ENCODE measurements at regions of chr6 and their contacts with region 1.

Region 1: GRCh38 chr6:132798869-132799538 is 567 bp upstream of the SLC18B1 start:
- DNase-seq: peak; percentile 86
- H3K4me3 ChIP-seq: peak overlapping the region; percentile 95 to 97 (median 96)
- H3K27ac ChIP-seq: peak overlapping the region; percentile 26
- H3K4me1 ChIP-seq: peaks cover 3% of the 10 kb centered on the region
- H3K27me3 ChIP-seq: peaks cover 0 to 3% of the 10 kb centered on the region in 2 experiments
- CTCF ChIP-seq: peak; percentile 78 to 84
- POLR2A ChIP-seq: no peak

Region 2: DNA sequence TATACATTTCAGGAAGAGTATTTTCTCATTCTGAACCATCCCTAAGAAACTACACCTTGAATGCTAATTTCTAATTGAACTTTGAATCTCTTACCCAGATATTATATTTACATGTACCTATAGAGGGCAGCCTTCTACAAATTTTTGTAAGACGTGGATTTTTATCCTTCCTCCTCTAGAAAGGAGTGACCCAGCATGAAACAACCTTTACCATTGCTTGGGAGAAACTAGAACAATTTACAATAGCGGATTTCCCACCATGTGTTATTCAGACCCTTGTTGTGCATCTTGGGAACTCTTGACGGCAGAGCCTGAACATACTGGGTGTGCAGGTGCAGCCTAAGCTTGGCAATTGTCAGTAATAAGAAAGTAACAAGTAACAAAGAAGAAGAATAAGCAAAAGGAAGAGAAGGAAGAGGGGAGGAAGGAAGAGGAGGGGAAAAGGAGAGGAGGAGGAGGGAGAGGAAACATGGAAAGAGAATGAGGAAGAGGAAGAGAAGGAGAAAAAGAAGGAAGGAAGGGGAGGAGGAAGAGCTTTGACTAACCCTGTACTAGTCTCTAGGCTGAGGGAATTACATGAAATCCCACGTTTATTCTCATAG is 129.2 kb before region 1 on chr6:
- CTCF ChIA-PET with region 1: interaction called, 154 read pairs
- POLR2A ChIA-PET with region 1: no interaction called
- dilution Hi-C with region 1: no loop called
- intact Hi-C with region 1: loop called (anchors 1 kb)
- DNase-seq: peak; percentile 56
- H3K4me3 ChIP-seq: no peak overlapping the region
- H3K27ac ChIP-seq: no peak overlapping the region
- H3K4me1 ChIP-seq: peaks cover 2% of the 10 kb centered on the region
- H3K27me3 ChIP-seq: no peaks in the 10 kb centered on the region
- CTCF ChIP-seq: peak in 1 of 2 donors; percentile 18
- POLR2A ChIP-seq: no peak

Region 3: DNA sequence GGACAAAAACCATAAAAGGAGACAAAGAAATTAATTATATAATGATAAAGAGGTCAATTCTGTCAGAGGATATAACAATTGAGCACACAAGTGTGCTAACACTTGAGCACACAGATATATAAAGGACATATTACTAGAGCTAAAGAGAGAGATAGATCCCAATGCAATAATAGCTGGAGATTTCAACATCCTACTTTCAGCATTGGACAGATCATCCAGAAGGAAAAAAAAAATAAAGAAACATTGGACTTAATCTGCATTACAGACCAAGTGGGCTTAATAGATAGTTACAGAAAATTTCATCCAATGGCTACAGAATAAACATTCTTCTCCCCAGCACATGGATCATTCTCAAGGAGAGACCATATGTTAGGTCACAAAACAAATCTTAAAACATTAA is 95.1 kb before region 1 on chr6:
- CTCF ChIA-PET with region 1: no interaction called
- POLR2A ChIA-PET with region 1: no interaction called
- dilution Hi-C with region 1: no loop called
- intact Hi-C with region 1: no loop called
- DNase-seq: no peak
- H3K4me3 ChIP-seq: no peak overlapping the region
- H3K27ac ChIP-seq: no peak overlapping the region
- H3K4me1 ChIP-seq: no peaks in the 10 kb centered on the region
- H3K27me3 ChIP-seq: peaks cover 1 to 4% of the 10 kb centered on the region in 2 experiments
- CTCF ChIP-seq: no peak
- POLR2A ChIP-seq: no peak

Region 4: DNA sequence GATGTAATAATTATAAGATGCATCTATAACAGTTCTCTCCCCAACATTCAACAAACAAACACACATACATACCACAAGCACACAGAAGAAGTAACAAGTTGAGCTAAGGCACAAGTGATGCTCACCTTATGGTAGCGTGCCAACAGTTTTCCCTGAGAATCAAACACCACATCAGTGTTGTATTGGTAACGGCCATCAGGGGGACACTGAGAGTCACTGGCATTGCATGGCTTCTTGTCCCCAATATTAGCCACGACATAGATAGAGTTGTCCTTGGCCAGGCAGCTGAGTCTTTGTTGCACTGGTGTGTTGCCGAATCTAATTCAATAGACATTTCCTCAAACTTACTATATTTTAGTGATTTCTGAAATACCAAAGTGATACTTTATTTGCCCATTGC is 70.4 kb before region 1 on chr6:
- CTCF ChIA-PET with region 1: interaction called, 11 read pairs
- POLR2A ChIA-PET with region 1: no interaction called
- dilution Hi-C with region 1: no loop called
- intact Hi-C with region 1: no loop called
- DNase-seq: no peak
- H3K4me3 ChIP-seq: no peak overlapping the region
- H3K27ac ChIP-seq: no peak overlapping the region
- H3K4me1 ChIP-seq: no peaks in the 10 kb centered on the region
- H3K27me3 ChIP-seq: peaks cover 0 to 2% of the 10 kb centered on the region in 2 experiments
- CTCF ChIP-seq: no peak
- POLR2A ChIP-seq: no peak

Region 5: DNA sequence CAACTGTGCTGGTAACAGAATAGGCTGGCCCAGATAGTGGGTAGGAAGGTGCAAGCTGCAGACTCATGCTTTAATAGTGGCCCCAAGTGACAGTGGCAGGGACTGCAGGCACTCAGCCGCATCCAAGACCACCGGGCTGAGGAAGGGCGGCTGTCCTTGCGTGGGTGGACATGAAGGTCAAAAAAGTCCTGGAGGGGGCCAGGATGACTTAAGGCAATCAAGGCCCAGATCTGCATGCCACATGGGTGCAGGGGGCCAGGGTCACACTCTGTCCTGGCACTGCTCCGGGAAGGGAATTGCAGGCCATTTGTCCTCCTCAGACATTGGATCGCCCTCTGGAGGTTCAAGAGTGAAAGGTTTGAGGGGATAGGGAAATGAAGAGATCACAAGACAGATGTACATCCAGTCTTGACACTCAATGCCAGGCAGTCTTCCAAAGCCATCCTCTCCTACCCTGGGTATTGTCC is 30.9 kb before region 1 on chr6:
- CTCF ChIA-PET with region 1: interaction called, 19 read pairs
- POLR2A ChIA-PET with region 1: interaction called, 3 read pairs
- dilution Hi-C with region 1: no loop called
- intact Hi-C with region 1: loop called (anchors 2 kb)
- DNase-seq: peak; percentile 32
- H3K4me3 ChIP-seq: no peak overlapping the region
- H3K27ac ChIP-seq: no peak overlapping the region
- H3K4me1 ChIP-seq: no peaks in the 10 kb centered on the region
- H3K27me3 ChIP-seq: peaks cover 0 to 3% of the 10 kb centered on the region in 2 experiments
- CTCF ChIP-seq: peak; percentile 16 to 21
- POLR2A ChIP-seq: no peak

Region 6: GRCh38 chr6:132788658-132789395 is 10.2 kb before region 1 on chr6:
- CTCF ChIA-PET with region 1: interaction called, 22 read pairs
- POLR2A ChIA-PET with region 1: no interaction called
- dilution Hi-C with region 1: no loop called
- intact Hi-C with region 1: no loop called
- DNase-seq: no peak
- H3K4me3 ChIP-seq: no peak overlapping the region
- H3K27ac ChIP-seq: no peak overlapping the region
- H3K4me1 ChIP-seq: peaks cover 20% of the 10 kb centered on the region
- H3K27me3 ChIP-seq: no peaks in the 10 kb centered on the region
- CTCF ChIP-seq: no peak
- POLR2A ChIP-seq: no peak

Region 7: DNA sequence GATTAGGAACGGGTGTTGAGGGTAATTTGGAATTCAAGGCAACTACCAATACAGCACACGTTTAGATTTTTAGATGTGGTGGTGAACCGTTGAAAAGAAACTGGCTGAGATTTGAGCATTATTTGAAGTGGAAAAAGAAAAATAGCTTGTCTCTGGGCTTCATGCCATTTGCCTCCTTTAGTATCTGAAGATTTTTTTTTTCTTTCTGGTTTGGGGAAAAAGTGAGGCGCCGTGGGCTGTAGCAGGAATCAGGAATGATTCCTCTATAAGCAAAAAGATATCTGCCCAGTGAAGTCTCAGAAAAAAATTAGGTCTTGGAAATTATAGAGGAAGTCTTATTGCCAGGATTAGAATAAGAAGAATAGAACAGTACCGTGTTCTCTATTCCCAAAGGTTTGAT is 103.9 kb after region 1 on chr6:
- CTCF ChIA-PET with region 1: no interaction called
- POLR2A ChIA-PET with region 1: no interaction called
- dilution Hi-C with region 1: no loop called
- intact Hi-C with region 1: no loop called
- DNase-seq: no peak
- H3K4me3 ChIP-seq: no peak overlapping the region
- H3K27ac ChIP-seq: no peak overlapping the region
- H3K4me1 ChIP-seq: no peaks in the 10 kb centered on the region
- H3K27me3 ChIP-seq: peaks cover 0 to 1% of the 10 kb centered on the region in 2 experiments
- CTCF ChIP-seq: no peak
- POLR2A ChIP-seq: no peak